ENCODE measurements at regions of chr3 and their contacts with region 1.

Region 1: DNA sequence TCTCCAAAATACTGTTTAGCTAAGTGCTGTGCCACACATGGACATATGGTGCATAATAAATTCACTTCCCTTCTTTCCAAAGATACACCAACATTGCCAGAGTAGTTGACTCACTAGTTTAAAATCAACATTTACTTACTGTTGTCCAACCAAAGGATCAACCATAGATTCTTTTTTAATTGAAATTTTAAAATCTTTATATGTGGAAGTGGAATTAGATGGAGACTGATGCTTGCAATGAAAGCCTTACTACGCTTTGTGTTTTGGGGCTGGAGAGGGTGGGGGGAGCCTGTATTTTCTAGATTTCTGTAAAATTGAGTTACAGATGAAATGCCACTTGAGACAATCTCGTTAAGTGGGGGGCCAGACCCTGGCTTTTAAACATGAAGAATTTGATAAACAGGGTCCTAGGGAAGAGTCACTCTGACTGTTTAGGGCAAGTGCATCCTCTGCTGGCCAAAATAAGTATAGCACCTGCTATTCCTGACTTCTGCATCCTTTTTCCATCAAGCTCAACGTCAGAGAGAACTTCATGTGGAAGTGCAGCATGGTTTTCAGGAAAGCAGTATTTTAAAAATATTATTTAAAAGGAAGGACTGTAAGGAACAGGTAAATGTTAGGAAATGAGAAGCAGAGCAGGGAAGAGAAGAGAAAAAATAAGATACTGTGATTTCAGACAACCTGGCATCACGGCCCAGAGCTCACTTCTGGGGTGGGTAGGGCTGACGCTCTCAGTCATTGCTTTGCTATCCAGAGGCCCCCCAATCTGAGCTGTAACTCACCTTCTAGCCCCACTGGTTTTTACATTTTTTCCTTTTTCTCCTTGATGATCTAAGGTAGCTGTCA is 76.7 kb downstream of the BOC start:
- DNase-seq: peak in 1 of 2 experiments; percentile 54
- H3K4me3 ChIP-seq: no peak overlapping the region
- H3K27ac ChIP-seq: peak overlapping the region; percentile 54
- H3K4me1 ChIP-seq: peaks cover 12% of the 10 kb centered on the region
- H3K27me3 ChIP-seq: no peaks in the 10 kb centered on the region
- CTCF ChIP-seq: peak; percentile 99

Region 2: GRCh38 chr3:113035387-113035982 is 252.5 kb before region 1 on chr3:
- CTCF ChIA-PET with region 1: interaction called, 6 read pairs
- POLR2A ChIA-PET with region 1: no interaction called
- intact Hi-C with region 1: loop called (anchors 5 kb)
- DNase-seq: peak; percentile 33 to 53
- H3K4me3 ChIP-seq: no peak overlapping the region
- H3K27ac ChIP-seq: no peak overlapping the region
- H3K4me1 ChIP-seq: no peaks in the 10 kb centered on the region
- H3K27me3 ChIP-seq: no peaks in the 10 kb centered on the region
- CTCF ChIP-seq: peak; percentile 92

Region 3: GRCh38 chr3:113097960-113098447 is 190.0 kb before region 1 on chr3:
- CTCF ChIA-PET with region 1: no interaction called
- POLR2A ChIA-PET with region 1: no interaction called
- intact Hi-C with region 1: no loop called
- DNase-seq: peak; percentile 57 to 81
- H3K4me3 ChIP-seq: no peak overlapping the region
- H3K27ac ChIP-seq: peak overlapping the region; percentile 49
- H3K4me1 ChIP-seq: peaks cover 19% of the 10 kb centered on the region
- H3K27me3 ChIP-seq: no peaks in the 10 kb centered on the region
- CTCF ChIP-seq: no peak

Region 4: DNA sequence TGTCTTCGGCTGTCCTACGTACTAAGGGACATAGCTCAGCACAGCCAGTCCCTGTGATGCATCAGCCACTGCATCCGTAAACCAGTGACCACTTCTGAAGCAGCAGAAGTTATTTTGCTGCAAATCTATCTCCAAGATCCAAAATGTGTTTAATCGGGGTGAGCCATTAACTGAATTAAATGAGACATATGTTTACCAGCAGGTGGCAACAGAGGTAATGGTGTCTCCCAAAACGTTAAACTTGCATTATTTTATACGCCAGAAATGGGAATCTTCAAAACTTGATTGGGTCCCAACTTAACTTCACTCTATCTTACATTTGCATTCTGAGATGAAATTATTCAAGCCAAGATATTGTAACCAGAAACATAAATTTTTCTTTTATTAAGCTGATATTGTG is 152.0 kb before region 1 on chr3:
- CTCF ChIA-PET with region 1: interaction called, 5 read pairs
- POLR2A ChIA-PET with region 1: no interaction called
- intact Hi-C with region 1: loop called (anchors 1 kb)
- DNase-seq: no peak
- H3K4me3 ChIP-seq: no peak overlapping the region
- H3K27ac ChIP-seq: no peak overlapping the region
- H3K4me1 ChIP-seq: no peaks in the 10 kb centered on the region
- H3K27me3 ChIP-seq: no peaks in the 10 kb centered on the region
- CTCF ChIP-seq: peak; percentile 74

Region 5: GRCh38 chr3:113626503-113627371 is 338.7 kb after region 1 on chr3:
- CTCF ChIA-PET with region 1: no interaction called
- POLR2A ChIA-PET with region 1: no interaction called
- intact Hi-C with region 1: loop called (anchors 10 kb)
- DNase-seq: peak; percentile 41
- H3K4me3 ChIP-seq: no peak overlapping the region
- H3K27ac ChIP-seq: no peak overlapping the region
- H3K4me1 ChIP-seq: 0 out of 2 replicates have a peak, but pooled peaks cover 4% of the 10 kb centered on the region
- H3K27me3 ChIP-seq: no peaks in the 10 kb centered on the region
- CTCF ChIP-seq: peak; percentile 86